ENCODE measurements at regions of chr19 and their contacts with region 1.

Region 1: DNA sequence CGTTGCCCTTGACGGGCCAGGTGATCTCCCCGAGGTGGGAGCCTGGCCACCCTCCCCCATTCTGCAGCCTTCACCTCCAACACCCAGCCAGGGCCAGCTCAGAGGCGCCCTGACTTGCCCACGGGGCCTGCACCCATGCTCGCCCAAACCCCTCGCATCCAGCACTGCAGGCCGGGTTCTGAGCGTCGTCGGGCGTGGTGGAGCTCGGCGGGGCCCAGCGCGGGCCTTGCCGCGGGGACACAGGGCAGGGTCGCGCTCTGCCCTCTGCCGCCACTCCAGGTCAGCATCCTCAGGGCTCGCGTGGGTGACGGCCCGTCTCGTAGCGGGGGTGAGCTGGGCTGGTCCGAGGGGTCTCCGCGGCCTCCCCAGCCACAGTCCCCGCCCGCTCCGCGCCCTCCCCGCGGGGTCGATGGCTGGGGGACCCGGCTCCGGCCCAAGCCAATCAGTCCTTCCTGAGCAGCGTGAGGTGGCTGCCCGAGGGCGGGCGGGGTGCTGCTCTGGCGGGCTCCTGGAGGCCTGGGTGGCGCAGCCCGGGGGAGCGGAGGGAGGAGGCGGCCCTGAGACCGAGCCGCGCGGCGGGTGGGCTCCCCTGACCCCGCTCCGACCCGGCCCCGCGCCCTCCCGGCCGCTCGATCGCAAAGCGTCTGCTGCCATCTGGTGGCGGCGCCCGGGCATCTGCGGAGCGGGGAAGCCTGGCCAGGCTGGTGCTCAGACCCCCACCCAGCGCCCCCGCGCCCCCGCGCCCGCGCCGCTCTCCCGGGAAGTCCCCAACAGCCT is 61.4 kb downstream of the CCNE1 start:
- DNase-seq: peak; percentile 67
- H3K4me3 Mint-ChIP-seq: peak overlapping the region; percentile 53
- H3K27ac Mint-ChIP-seq: no peak overlapping the region
- H3K4me1 Mint-ChIP-seq: peaks cover 6% of the 10 kb centered on the region
- H3K27me3 Mint-ChIP-seq: peaks cover 13% of the 10 kb centered on the region

Region 2: DNA sequence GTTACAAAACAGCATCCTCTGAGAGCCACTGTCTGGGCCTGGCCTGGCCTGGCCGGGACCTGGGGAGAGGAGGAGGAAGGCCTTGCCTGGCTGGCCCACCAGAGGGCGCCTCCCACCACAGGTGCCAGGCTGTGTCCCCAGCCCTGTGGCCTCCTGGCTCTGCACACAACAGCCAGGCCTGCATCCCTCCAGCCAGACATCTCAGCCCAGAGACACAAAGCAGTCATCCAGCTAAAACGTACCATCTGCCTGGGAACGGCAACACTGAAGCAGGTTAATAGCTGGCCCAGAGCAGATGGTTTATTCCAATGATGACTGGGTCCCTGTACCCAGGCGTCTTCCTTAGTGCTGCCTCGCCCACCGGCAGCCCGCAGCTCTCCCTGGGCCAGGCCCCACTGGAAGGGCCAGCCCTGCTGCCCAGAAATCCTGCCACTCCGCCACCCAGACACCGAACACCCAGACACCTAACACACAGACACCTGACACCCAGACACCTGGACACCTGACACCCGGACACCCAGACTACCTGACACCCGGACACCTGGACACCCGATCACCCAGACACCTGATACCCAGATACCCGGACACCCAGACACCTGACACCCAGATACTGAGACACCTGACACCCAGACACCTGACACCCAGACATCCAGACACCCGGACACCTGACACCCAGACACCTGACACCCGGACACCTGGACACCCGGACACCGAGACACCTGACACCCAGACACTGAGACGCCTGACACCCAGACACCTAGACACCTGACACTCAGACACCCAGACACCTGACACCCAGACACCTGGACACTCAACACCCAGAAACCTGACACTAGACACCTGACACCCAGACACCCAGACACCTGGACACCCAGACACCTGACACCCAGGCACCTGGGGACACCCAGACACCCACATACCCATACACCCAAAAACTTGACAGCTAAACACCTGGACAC is 178.3 kb before region 1 on chr19:
- CTCF ChIA-PET with region 1: interaction called, 3 read pairs
- intact Hi-C with region 1: loop called (anchors 1 kb)
- DNase-seq: peak; percentile 88
- H3K4me3 Mint-ChIP-seq: no peak overlapping the region
- H3K27ac Mint-ChIP-seq: no peak overlapping the region
- H3K4me1 Mint-ChIP-seq: peaks cover 11% of the 10 kb centered on the region
- H3K27me3 Mint-ChIP-seq: no peaks in the 10 kb centered on the region

Region 3: DNA sequence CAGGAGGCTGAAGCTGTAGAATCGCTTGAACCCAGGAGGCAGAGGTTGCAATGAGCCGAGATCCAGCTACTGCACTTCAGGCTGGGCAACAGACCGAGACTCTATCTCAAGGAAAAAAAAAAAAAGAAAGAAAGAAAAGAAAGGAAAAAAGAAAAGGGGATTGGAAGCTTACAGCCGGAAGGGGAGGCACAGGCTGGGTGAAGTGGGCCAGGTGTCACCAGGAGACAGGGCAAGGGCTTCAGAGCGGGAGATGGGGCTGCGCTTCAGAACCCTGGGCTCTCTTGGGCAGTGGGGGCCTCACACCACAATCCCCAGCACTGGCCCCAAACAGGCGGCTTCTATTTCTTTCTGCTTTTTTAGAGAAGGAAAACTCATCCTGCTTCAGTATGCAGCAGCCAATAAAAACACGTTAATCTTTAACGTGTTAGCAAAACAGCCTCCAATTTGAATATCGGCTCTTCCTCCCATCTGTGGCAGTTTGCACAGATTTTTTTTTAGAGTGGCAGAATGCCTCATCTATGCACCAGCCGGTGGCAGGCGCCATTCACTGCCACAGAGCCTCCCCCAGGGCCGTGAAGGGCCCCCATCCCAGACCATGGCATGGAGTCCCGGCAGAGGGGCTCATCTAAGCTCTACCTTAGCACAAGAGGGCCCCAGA is 111.5 kb before region 1 on chr19:
- CTCF ChIA-PET with region 1: interaction called, 27 read pairs
- intact Hi-C with region 1: loop called (anchors 1 kb)
- DNase-seq: no peak
- H3K4me3 Mint-ChIP-seq: no peak overlapping the region
- H3K27ac Mint-ChIP-seq: no peak overlapping the region
- H3K4me1 Mint-ChIP-seq: peaks cover 3% of the 10 kb centered on the region
- H3K27me3 Mint-ChIP-seq: no peaks in the 10 kb centered on the region

Region 4: GRCh38 chr19:29811125-29812079 is 61.8 kb before region 1 on chr19 and contains the start of gene CCNE1:
- CTCF ChIA-PET with region 1: interaction called, 3 read pairs
- intact Hi-C with region 1: loop called (anchors 2 kb)
- DNase-seq: peak; percentile 97
- H3K4me3 Mint-ChIP-seq: peak within 1 kb of the TSS; percentile 84
- H3K27ac Mint-ChIP-seq: peak within 1 kb of the TSS; percentile 88
- H3K4me1 Mint-ChIP-seq: peaks cover 11% of the 10 kb centered on the region
- H3K27me3 Mint-ChIP-seq: no peaks in the 10 kb centered on the region
- total RNA-seq, gene CCNE1: 31.2 to 34.1 TPM

Region 5: DNA sequence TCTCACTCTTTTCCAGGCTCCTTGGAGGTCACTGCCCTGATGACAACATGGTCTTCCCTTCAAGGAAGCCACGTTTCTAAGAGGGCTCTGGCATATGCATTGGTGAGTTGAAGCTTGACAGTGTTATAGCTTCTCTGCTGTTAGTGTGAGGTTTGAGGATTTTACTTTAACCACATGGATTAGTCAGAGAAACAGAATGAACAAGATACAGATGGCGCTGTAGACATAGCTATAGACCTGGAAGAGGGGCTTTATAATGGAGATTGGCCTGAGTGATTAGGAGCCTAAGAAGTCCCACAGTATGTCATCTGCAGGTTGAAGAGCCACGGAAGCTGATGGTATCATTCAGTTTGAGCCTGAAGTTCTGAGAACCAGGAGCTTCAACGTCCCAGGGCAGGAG is 50.4 kb after region 1 on chr19:
- CTCF ChIA-PET with region 1: no interaction called
- intact Hi-C with region 1: no loop called
- DNase-seq: no peak
- H3K4me3 Mint-ChIP-seq: no peak overlapping the region
- H3K27ac Mint-ChIP-seq: no peak overlapping the region
- H3K4me1 Mint-ChIP-seq: peaks cover 2% of the 10 kb centered on the region
- H3K27me3 Mint-ChIP-seq: no peaks in the 10 kb centered on the region

Region 6: DNA sequence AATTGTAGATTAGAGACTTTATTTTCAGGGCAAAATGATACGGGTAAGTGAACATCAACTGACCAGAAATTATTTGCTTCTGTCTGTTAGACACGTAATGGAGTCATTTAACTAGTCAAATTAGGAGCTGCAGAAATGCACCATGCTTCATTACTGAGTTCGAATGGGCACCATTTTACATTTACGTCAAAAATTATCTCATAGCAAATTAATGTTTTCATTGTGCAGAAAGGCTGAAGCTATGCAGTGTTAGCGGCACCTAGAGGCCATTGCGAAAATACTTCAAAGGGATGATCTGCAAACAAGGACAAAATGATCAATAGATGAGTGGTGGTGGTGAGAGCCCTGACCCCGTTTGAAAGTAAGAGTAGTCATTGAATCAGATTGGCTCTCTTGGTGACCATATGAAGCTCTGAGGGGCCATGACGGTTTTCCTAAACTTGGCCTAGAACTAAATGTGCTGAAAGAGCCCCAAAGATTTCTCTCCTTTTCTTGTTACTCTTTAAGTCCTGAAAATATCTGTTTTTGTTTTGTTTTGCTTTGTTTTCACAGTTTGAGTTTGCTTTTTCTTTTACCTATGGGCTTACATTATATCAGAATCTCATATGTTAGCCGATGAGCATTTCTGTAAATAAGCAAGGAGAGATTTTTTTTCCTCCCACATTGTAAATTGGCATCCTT is 776.9 kb after region 1 on chr19:
- CTCF ChIA-PET with region 1: no interaction called
- intact Hi-C with region 1: loop called (anchors 5 kb)
- DNase-seq: peak; percentile 65
- H3K4me3 Mint-ChIP-seq: no peak overlapping the region
- H3K27ac Mint-ChIP-seq: no peak overlapping the region
- H3K4me1 Mint-ChIP-seq: no peaks in the 10 kb centered on the region
- H3K27me3 Mint-ChIP-seq: peaks cover 29% of the 10 kb centered on the region